Naive thymus-derived CD4-positive, alpha-beta T cell (primary cell): ENCODE measurements at regions of chr1 and their contacts with region 1.

Region 1: DNA sequence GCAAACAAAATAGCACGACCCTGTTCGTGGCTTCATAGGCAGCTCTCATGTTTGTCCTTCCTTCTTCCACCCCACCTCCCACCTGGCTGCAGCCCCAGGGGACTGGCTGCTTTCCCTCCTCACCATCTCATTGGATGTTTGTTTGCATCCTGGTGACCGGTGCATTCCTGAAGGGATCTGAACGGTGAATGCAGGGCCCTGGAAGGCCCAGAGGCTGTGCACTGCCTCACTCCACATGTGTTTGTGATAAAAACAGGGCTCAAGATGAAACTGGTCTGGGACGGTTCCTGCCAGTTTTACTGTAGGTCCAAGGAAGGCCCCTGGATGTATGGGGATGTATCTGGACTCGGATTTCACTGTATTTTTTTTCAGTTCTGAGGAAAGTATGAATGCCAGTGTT is 42.8 kb downstream of the CNN3 start:
- DNase-seq: no peak
- ATAC-seq: no peak
- H3K4me3 ChIP-seq: no peak overlapping the region
- H3K4me3 Mint-ChIP-seq: peak overlapping the region in 8 of 10 donors; percentile 0 to 79 (median 68)
- H3K27ac ChIP-seq: no peak overlapping the region
- H3K27ac Mint-ChIP-seq: peak overlapping the region in 8 of 9 donors; percentile 47 to 93 (median 80)
- H3K4me1 ChIP-seq: peaks cover 0 to 6% of the 10 kb centered on the region in 2 donors
- H3K4me1 Mint-ChIP-seq: peaks cover 6 to 16% (median 16%) of the 10 kb centered on the region in 7 donors
- H3K27me3 ChIP-seq: no peaks in the 10 kb centered on the region
- H3K27me3 Mint-ChIP-seq: peaks cover 0 to 1% (median 0%) of the 10 kb centered on the region in 5 donors

Region 2: GRCh38 chr1:94898491-94899385 is 14.6 kb after region 1 on chr1:
- CTCF ChIA-PET with region 1: no interaction called
- POLR2A ChIA-PET with region 1: no interaction called
- intact Hi-C with region 1: no loop called
- DNase-seq: no peak
- ATAC-seq: no peak
- H3K4me3 ChIP-seq: no peak overlapping the region
- H3K4me3 Mint-ChIP-seq: no peak overlapping the region
- H3K27ac ChIP-seq: no peak overlapping the region
- H3K27ac Mint-ChIP-seq: no peak overlapping the region
- H3K4me1 ChIP-seq: no peaks in the 10 kb centered on the region
- H3K4me1 Mint-ChIP-seq: no peaks in the 10 kb centered on the region
- H3K27me3 ChIP-seq: peaks cover 0 to 2% of the 10 kb centered on the region in 2 donors
- H3K27me3 Mint-ChIP-seq: peaks cover 0 to 5% (median 0%) of the 10 kb centered on the region in 5 donors

Region 3: GRCh38 chr1:94926915-94927404 is 42.9 kb after region 1 on chr1 and contains the start of gene CNN3:
- CTCF ChIA-PET with region 1: no interaction called
- POLR2A ChIA-PET with region 1: no interaction called
- intact Hi-C with region 1: loop called in 1 of 2 experiments (anchors 2 kb)
- DNase-seq: peak; percentile 56 to 78 (median 68)
- ATAC-seq: peak; percentile 91
- H3K4me3 ChIP-seq: peak within 1 kb of the TSS; percentile 39
- H3K4me3 Mint-ChIP-seq: peak within 1 kb of the TSS; percentile 88 to 97 (median 94)
- H3K27ac ChIP-seq: peak within 1 kb of the TSS; percentile 63
- H3K27ac Mint-ChIP-seq: peak within 1 kb of the TSS; percentile 37 to 92 (median 84)
- H3K4me1 ChIP-seq: no peaks in the 10 kb centered on the region
- H3K4me1 Mint-ChIP-seq: peaks cover 12 to 38% (median 34%) of the 10 kb centered on the region in 7 donors
- H3K27me3 ChIP-seq: no peaks in the 10 kb centered on the region
- H3K27me3 Mint-ChIP-seq: peaks cover 18 to 57% (median 26%) of the 10 kb centered on the region in 5 donors
- total RNA-seq, gene CNN3: 4.4 to 14.9 (median 7.4) TPM

Region 4: DNA sequence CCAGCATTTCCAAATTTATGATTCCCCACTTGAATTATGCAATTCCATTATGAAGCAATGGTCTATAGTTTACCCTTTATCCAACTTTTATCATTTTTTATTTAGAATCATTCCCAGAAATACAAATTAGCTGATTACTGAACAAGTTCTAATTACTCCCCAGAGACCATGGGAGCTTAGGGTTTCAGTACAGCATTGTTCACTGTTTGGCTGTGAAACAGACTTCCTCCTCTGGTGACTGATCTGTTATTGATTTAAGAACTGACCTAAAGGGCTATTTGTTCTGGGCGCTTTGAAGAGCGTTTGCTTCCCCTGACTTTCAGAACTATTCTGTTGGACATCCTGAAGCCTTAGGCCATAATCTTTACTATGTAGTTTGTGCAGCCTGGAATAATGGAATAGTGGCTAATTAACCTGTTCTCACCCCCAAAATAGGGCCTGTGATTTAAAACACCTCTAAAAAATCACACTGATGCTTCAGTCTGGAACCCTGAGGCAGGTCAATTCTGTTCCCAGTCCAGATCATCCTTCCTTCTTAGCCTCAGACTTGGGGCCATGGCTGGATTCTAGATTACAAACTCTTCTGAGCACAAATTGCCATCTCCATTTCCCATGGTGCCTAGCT is 130.0 kb after region 1 on chr1:
- CTCF ChIA-PET with region 1: no interaction called
- POLR2A ChIA-PET with region 1: no interaction called
- intact Hi-C with region 1: no loop called
- DNase-seq: no peak
- ATAC-seq: no peak
- H3K4me3 ChIP-seq: no peak overlapping the region
- H3K4me3 Mint-ChIP-seq: no peak overlapping the region
- H3K27ac ChIP-seq: no peak overlapping the region
- H3K27ac Mint-ChIP-seq: no peak overlapping the region
- H3K4me1 ChIP-seq: no peaks in the 10 kb centered on the region
- H3K4me1 Mint-ChIP-seq: peaks cover 0 to 5% (median 0%) of the 10 kb centered on the region in 7 donors
- H3K27me3 ChIP-seq: no peaks in the 10 kb centered on the region
- H3K27me3 Mint-ChIP-seq: peaks cover 0 to 4% (median 0%) of the 10 kb centered on the region in 5 donors